ENCODE measurements at regions of chr22 and their contacts with region 1.

Region 1: DNA sequence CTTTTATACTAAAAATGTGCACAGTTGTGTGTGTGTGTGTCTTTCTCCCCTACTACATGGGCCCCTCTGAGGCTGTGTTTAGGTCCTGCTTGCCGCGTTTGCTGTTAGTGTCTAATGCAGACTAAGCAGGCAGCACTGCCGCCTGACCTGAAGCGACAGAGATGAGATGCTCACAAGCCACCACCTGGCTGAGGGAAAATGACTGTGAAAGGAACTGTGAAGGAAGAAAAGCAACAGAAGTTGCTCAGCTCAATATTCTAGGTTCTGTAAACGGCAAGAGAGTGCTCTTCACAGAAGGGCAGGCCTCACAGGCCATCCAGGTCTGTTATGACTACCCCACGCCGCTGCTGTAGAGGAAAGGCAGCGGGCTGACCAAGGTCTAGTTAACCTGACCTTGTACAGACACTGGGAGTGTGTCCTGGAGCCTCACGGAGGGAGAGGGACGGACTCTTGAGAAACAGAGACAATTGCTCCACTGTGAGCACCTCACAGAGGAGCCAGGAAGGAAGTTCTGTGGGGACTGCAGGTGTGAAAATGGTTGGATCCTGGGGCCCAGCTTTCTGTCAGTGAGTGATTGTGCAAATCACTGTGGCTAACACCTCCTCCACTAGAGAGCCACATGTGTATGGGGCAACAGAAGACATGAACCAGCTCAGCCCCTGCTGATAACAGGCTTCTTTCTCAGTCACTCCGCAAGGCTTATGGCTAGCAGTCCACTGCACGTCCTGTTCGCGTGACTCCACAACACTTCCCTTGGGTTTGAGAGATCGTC is 31.3 kb upstream of the YPEL1 start:
- DNase-seq: peak; percentile 28 to 94 (median 62)
- ATAC-seq: peak; percentile 72
- H3K4me3 ChIP-seq: peak overlapping the region in 1 of 2 experiments; percentile 22
- H3K4me3 Mint-ChIP-seq: peak overlapping the region; percentile 55
- H3K27ac ChIP-seq: peak overlapping the region; percentile 41 to 76
- H3K27ac Mint-ChIP-seq: peak overlapping the region; percentile 93
- H3K4me1 ChIP-seq: peaks cover 57% of the 10 kb centered on the region
- H3K4me1 Mint-ChIP-seq: peaks cover 65% of the 10 kb centered on the region
- H3K27me3 ChIP-seq: no peaks in the 10 kb centered on the region
- H3K27me3 Mint-ChIP-seq: no peaks in the 10 kb centered on the region
- CTCF ChIP-seq: no peak

Region 2: DNA sequence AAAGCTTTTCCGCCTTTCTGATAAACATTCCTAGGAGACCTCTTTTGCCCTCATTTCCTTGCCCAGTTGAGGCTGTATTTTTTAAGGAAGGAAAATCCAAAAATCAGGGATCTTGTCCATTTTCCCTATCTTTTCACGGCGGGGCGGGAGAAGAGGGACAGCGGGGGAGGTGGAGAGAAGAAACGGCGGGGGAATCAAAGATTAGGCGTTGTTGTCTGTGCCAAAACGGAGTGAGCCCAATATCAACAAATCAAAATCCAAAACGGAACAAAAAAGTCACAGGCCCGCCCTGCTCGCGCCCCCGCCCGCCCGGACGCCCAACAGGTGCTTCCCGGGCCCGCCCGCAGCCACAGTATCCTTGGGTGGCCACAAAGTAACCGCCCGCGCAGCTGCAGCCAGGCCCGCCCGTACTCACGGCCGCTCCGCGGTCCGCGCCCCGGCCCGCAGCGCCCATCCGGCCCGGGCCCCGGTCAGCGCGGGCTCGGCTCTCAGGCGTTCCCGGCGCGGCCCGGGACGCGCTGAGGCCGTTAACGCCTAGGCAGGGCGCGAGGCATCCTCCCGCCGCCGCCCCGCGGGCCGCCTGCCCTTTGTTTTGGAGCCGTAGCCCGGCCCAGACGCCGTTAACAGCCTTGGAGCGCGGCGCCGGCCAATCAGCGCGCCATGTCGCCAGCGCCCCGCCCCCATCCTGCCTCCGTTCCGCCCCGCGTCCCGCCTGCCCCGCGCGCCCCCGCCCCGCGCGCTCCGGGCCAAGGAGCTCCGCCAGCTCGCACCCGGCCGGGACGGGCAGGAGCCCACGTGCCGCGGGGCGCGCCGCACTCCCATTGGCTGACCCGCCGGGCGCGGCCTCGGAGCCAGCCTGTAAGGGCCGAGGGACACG is 31.4 kb before region 1 on chr22 and contains the start of gene YPEL1:
- CTCF ChIA-PET with region 1: no interaction called
- POLR2A ChIA-PET with region 1: interaction called, 5 read pairs
- intact Hi-C with region 1: loop called (anchors 2 kb)
- DNase-seq: peak; percentile 92 to 98 (median 96)
- ATAC-seq: peak; percentile 91
- H3K4me3 ChIP-seq: peak within 1 kb of the TSS; percentile 59 to 78
- H3K4me3 Mint-ChIP-seq: peak within 1 kb of the TSS; percentile 91
- H3K27ac ChIP-seq: peak within 1 kb of the TSS; percentile 41 to 75
- H3K27ac Mint-ChIP-seq: peak within 1 kb of the TSS; percentile 88
- H3K4me1 ChIP-seq: peaks cover 12% of the 10 kb centered on the region
- H3K4me1 Mint-ChIP-seq: peaks cover 23% of the 10 kb centered on the region
- H3K27me3 ChIP-seq: no peaks in the 10 kb centered on the region
- H3K27me3 Mint-ChIP-seq: no peaks in the 10 kb centered on the region
- CTCF ChIP-seq: no peak
- total RNA-seq, gene YPEL1: 3.2 to 3.3 TPM

Region 3: DNA sequence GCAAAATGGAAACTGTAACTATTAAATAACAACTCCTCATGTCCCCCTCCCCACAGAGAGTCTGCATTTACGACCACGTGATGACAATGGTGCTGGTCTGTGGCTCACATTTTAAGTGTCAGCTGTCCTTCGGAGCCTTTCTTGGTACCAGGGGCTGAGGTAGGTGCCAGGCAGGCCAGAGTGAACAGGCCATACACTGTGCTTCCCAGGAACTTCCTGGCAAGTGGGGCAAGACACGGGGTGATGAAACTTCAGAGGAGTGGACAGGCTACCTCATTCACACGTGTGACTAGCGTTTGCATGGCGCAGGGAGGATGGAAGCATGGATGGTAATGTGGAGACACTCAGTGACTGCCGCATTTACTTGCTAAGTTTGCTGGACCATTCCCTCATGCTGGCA is 20.9 kb before region 1 on chr22:
- CTCF ChIA-PET with region 1: no interaction called
- POLR2A ChIA-PET with region 1: no interaction called
- intact Hi-C with region 1: loop called in 1 of 2 experiments (anchors 2 kb)
- DNase-seq: no peak
- ATAC-seq: no peak
- H3K4me3 ChIP-seq: no peak overlapping the region
- H3K4me3 Mint-ChIP-seq: no peak overlapping the region
- H3K27ac ChIP-seq: no peak overlapping the region
- H3K27ac Mint-ChIP-seq: no peak overlapping the region
- H3K4me1 ChIP-seq: no peaks in the 10 kb centered on the region
- H3K4me1 Mint-ChIP-seq: no peaks in the 10 kb centered on the region
- H3K27me3 ChIP-seq: no peaks in the 10 kb centered on the region
- H3K27me3 Mint-ChIP-seq: no peaks in the 10 kb centered on the region
- CTCF ChIP-seq: no peak

Region 4: DNA sequence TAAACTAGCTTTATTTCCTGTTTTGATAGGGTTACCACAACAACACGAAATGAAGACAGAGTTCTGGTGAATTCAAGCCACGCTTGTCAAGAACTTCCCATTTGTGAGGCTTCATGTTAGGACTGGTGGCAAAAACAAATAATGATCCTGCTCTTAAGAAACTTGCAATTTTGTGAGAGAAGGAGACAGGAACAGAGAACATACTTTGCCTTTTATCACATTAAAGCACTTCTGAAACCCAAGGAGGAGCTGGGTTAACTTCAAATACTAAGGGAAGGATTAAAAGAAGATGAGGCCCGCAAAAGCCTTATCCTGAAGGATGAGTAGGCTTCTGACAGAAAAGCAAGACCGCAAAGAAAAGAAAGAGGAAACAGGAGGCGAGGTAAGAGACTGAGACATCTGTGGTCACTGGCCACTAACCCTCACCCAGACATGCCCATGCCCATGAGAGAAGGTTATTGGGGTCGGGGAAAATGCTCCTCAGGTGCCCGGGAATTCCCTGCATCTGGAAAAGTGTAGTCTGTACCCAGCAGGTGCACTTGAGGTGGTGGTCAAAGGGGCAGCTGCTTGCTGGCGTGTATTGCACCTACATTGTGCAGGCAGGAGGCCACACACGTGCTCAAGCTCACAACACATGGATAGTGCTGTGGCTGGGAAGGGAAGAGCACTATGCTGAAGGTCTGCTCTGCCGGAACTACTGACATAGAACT is 50.1 kb after region 1 on chr22:
- CTCF ChIA-PET with region 1: no interaction called
- POLR2A ChIA-PET with region 1: no interaction called
- intact Hi-C with region 1: loop called in 1 of 2 experiments (anchors 10 kb)
- DNase-seq: peak in 5 of 9 experiments; percentile 27 to 91 (median 35)
- ATAC-seq: peak; percentile 92
- H3K4me3 ChIP-seq: no peak overlapping the region
- H3K4me3 Mint-ChIP-seq: peak overlapping the region; percentile 74
- H3K27ac ChIP-seq: peak overlapping the region; percentile 60 to 91
- H3K27ac Mint-ChIP-seq: peak overlapping the region; percentile 97
- H3K4me1 ChIP-seq: peaks cover 41% of the 10 kb centered on the region
- H3K4me1 Mint-ChIP-seq: peaks cover 72% of the 10 kb centered on the region
- H3K27me3 ChIP-seq: no peaks in the 10 kb centered on the region
- H3K27me3 Mint-ChIP-seq: no peaks in the 10 kb centered on the region
- CTCF ChIP-seq: no peak

Region 5: GRCh38 chr22:21881841-21882753 is 115.2 kb after region 1 on chr22:
- CTCF ChIA-PET with region 1: no interaction called
- POLR2A ChIA-PET with region 1: no interaction called
- intact Hi-C with region 1: no loop called
- DNase-seq: no peak
- ATAC-seq: no peak
- H3K4me3 ChIP-seq: no peak overlapping the region
- H3K4me3 Mint-ChIP-seq: no peak overlapping the region
- H3K27ac ChIP-seq: no peak overlapping the region
- H3K27ac Mint-ChIP-seq: no peak overlapping the region
- H3K4me1 ChIP-seq: no peaks in the 10 kb centered on the region
- H3K4me1 Mint-ChIP-seq: no peaks in the 10 kb centered on the region
- H3K27me3 ChIP-seq: no peaks in the 10 kb centered on the region
- H3K27me3 Mint-ChIP-seq: no peaks in the 10 kb centered on the region
- CTCF ChIP-seq: no peak

Region 6: DNA sequence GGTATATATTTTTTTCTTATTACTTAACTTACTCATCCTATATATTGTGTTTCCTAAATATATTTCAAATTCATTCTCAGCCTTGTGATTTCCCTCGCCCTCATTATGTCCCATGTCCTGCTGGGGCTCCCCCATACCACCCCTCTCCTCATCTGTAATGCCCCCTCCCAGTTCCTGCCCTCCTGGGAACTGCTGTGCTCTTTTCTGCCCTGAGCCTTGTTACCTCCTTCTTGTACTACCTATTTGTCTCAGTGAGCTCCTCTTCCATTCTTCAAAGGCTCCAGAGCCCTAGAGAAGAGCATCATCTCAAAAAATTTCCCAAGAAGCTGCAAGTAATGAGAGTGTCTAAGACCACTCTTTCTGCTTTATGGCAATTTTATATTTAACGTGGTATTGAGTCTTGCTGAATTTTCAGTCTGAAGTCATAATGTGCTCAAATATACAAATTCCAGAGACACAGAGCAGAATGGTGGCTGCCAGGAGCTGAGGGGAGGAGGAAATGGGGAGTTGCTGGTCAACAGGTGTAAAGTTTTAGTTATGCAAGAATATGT is 282.2 kb after region 1 on chr22:
- CTCF ChIA-PET with region 1: no interaction called
- POLR2A ChIA-PET with region 1: no interaction called
- intact Hi-C with region 1: no loop called
- DNase-seq: no peak
- ATAC-seq: no peak
- H3K4me3 ChIP-seq: no peak overlapping the region
- H3K4me3 Mint-ChIP-seq: no peak overlapping the region
- H3K27ac ChIP-seq: no peak overlapping the region
- H3K27ac Mint-ChIP-seq: no peak overlapping the region
- H3K4me1 ChIP-seq: no peaks in the 10 kb centered on the region
- H3K4me1 Mint-ChIP-seq: no peaks in the 10 kb centered on the region
- H3K27me3 ChIP-seq: no peaks in the 10 kb centered on the region
- H3K27me3 Mint-ChIP-seq: peaks cover 30% of the 10 kb centered on the region
- CTCF ChIP-seq: no peak

Measured in CD8-positive, alpha-beta T cell (primary cell).